ENCODE measurements at regions of chrX and their contacts with region 1.

Region 1: GRCh38 chrX:72540318-72540717 is 32.3 kb downstream of the HDAC8 start:
- DNase-seq: peak in 1 of 2 experiments; percentile 1
- H3K4me3 ChIP-seq: no peak overlapping the region
- H3K4me3 Mint-ChIP-seq: no peak overlapping the region
- H3K27ac Mint-ChIP-seq: peak overlapping the region; percentile 48
- H3K4me1 ChIP-seq: no peaks in the 10 kb centered on the region
- H3K4me1 Mint-ChIP-seq: peaks cover 8% of the 10 kb centered on the region
- H3K27me3 ChIP-seq: no peaks in the 10 kb centered on the region
- H3K27me3 Mint-ChIP-seq: no peaks in the 10 kb centered on the region
- CTCF ChIP-seq: peak in 1 of 2 experiments; percentile 21

Region 2: GRCh38 chrX:72245461-72246089 is 294.7 kb before region 1 on chrX:
- CTCF ChIA-PET with region 1: no interaction called
- POLR2A ChIA-PET with region 1: no interaction called
- intact Hi-C with region 1: loop called (anchors 1 kb)
- DNase-seq: peak; percentile 50 to 64
- H3K4me3 ChIP-seq: no peak overlapping the region
- H3K4me3 Mint-ChIP-seq: no peak overlapping the region
- H3K27ac Mint-ChIP-seq: no peak overlapping the region
- H3K4me1 ChIP-seq: no peaks in the 10 kb centered on the region
- H3K4me1 Mint-ChIP-seq: no peaks in the 10 kb centered on the region
- H3K27me3 ChIP-seq: no peaks in the 10 kb centered on the region
- H3K27me3 Mint-ChIP-seq: no peaks in the 10 kb centered on the region
- CTCF ChIP-seq: peak; percentile 65 to 70

Region 3: DNA sequence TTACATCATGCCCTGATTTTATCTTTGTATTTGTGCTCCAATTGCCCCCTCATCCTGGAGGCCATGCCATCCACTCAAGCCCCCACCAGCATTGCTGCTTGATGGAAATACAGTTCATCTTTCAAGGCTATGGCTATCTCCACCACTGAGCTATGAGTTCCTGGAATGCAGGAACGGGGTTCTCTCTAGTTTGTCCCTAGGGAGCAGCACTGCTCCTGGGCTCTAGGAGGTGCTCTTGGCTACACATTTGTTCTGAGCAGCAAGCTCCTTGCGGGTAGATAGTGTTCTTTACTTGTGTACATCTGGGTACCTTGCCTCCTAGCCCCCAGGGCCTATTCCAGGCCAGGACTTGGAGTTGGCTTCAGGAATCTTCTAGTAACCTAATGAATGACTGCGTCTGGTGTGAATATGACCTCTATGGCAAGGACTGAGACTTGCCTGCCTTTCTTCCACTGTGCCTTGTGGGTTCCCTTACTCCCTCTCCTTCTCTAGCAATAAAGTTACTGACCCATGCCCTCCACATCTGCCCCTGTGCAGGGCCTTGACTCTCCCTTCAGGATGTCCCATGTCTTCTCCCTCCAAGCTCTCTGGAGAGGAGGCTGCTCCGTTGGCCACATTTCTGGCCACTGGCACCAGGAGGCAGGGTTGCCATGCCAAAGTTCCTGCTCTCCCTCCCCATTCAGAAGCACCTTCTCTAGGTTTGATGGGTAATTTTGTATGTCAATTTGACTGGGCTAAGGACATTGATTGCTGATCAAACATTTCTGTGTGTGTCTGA is 242.2 kb before region 1 on chrX:
- CTCF ChIA-PET with region 1: interaction called, 23 read pairs
- POLR2A ChIA-PET with region 1: interaction called, 5 read pairs
- intact Hi-C with region 1: loop called (anchors 1 kb)
- DNase-seq: peak in 1 of 2 experiments; percentile 7
- H3K4me3 ChIP-seq: no peak overlapping the region
- H3K4me3 Mint-ChIP-seq: no peak overlapping the region
- H3K27ac Mint-ChIP-seq: no peak overlapping the region
- H3K4me1 ChIP-seq: no peaks in the 10 kb centered on the region
- H3K4me1 Mint-ChIP-seq: peaks cover 6% of the 10 kb centered on the region
- H3K27me3 ChIP-seq: no peaks in the 10 kb centered on the region
- H3K27me3 Mint-ChIP-seq: peaks cover 9% of the 10 kb centered on the region
- CTCF ChIP-seq: peak in 1 of 2 experiments; percentile 20

Measured in Caco-2 (cell line).